Endothelial cell of umbilical vein (primary cell): ENCODE measurements at regions of chr11 and their contacts with region 1.

Region 1: DNA sequence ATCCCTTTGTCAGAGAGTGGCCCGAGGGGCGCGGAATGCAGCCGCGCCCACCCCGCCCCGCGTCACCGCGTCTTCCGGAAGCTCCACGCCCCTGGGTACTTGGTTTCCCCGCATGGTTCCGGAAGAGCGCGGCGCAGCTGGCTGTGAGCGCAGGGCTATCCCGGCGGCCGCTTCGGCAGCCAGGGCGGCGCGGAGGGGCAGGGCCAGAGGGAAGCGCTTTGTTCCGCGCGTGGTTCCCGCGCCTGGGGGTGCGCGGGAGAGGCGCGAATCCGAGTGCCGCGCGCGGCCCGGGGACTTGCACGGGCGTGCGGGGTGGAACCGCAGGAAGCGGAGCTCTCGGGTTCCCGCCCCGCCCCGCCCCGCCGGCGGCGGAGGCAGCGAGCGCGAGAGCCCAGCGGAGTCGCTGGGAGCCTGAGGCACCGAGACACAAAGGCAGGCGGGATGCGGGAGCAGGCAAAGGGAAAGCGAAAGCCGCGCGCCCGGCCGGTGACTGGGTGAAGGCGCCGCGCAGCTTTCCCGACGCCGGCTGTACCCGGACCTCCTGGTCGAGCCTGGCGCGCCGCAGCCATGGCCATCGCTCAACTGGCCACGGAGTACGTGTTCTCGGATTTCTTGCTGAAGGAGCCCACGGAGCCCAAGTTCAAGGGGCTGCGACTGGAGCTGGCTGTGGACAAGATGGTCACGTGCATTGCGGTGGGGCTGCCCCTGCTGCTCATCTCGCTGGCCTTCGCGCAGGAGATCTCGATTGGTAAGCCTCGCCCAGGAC is at the start of gene PANX1:
- DNase-seq: peak; percentile 81
- H3K4me3 ChIP-seq: peak within 1 kb of the TSS; percentile 76 to 87 (median 77)
- H3K27ac ChIP-seq: peak within 1 kb of the TSS; percentile 86
- H3K4me1 ChIP-seq: peaks cover 41% of the 10 kb centered on the region
- H3K27me3 ChIP-seq: no peaks in the 10 kb centered on the region
- CTCF ChIP-seq: no peak
- POLR2A ChIP-seq: peak; percentile 76
- total RNA-seq, gene PANX1: 17.7 and 20.9 TPM in 2 replicates

Region 2: DNA sequence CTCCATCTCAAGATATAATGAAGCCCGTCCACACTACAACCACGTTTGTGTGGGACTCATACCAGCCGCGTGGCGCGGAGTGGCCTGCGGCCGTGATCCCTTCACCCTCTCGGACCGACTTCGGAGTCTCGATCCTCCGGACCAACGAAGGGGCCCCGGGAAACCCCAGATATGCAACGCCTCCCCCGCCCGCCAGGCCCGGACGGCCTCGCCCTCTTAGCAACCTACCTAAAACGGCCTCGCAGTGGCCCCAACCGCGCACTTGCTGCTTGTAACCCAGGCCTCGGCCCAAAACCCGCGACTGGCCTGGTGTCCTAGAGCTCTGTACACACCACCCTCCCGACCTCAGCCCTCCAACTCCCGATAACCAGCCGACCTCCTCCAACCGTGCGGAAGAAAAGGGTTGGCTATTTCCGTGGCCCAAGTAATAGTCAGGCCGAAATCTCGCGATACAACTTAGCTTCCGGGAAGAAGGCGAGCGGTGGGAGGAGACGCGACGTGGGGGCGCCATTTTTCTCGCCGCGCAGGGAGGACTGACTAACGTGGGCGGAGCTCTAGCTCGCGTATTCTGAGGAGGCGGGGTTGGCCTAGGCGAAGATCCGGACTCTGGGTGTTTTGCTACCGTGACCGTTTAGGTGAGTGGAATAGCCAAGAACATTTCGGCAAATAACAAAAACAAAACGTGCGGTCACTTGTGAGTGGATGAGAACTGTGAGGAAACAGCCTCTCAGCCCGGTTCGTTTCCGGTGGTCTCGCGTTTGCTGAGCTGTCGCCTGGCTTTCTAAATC is 387.6 kb before region 1 on chr11 and contains the starts of genes C11orf54 and TAF1D:
- CTCF ChIA-PET with region 1: no interaction called
- POLR2A ChIA-PET with region 1: no interaction called
- dilution Hi-C with region 1: no loop called
- intact Hi-C with region 1: loop called (anchors 2 kb)
- DNase-seq: peak; percentile 98
- H3K4me3 ChIP-seq: peak within 1 kb of the TSS; percentile 75 to 99 (median 93)
- H3K27ac ChIP-seq: peak within 1 kb of the TSS; percentile 54
- H3K4me1 ChIP-seq: peaks cover 28% of the 10 kb centered on the region
- H3K27me3 ChIP-seq: no peaks in the 10 kb centered on the region
- CTCF ChIP-seq: no peak
- POLR2A ChIP-seq: peak; percentile 99
- total RNA-seq, gene C11orf54: 17.7 and 18.7 TPM in 2 replicates
- total RNA-seq, gene TAF1D: 172 and 181 TPM in 2 replicates

Region 3: DNA sequence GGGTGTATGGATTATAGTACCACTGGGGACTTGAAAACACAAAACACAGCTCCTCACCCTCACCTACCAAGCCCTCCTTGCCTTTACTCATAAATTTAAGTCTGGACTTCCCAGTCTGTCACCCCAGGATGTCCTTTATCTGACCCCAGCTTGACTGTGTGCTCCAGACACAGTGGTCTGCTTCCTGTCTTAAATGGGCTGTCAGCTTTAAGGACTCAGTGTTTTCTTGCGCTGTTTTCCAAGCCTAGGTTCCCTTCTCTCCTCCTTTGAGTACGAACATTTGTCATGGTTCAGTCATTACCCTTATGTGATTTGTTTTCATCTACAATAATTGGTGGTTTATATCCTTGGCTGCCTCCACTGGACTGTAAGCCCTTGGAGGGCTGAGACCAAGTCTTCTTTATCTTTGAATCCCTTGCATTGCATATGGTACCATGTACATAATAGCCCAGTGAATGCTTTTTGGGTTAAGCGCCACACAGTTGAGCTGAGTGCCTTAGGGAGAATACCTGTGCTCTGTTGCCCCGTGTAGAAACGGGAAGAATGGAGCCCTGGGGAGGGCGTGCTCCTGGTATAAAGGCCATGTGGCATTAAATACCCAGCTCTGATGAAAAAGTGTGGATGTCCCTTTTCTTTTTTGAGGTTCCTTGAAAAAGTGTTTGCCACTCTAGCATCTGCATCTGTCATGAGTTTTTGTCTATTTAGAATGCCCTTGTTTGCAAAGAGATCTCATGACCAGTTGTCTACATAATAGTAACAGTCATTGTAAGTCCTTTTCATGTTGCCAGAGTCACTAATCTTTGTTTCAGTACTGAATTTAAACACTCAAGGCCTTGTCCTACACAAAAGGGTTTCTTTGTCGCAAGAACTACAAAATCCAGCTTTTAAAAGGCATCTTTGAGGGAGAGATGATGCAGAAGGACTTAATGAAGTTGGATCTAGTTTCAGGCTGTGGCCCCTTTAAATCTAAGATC is 13.7 kb after region 1 on chr11:
- CTCF ChIA-PET with region 1: interaction called, 11 read pairs
- POLR2A ChIA-PET with region 1: interaction called, 3 read pairs
- dilution Hi-C with region 1: no loop called
- intact Hi-C with region 1: no loop called
- DNase-seq: peak; percentile 70
- H3K4me3 ChIP-seq: no peak overlapping the region
- H3K27ac ChIP-seq: peak overlapping the region; percentile 68
- H3K4me1 ChIP-seq: peaks cover 29% of the 10 kb centered on the region
- H3K27me3 ChIP-seq: no peaks in the 10 kb centered on the region
- CTCF ChIP-seq: no peak
- POLR2A ChIP-seq: no peak

Region 4: GRCh38 chr11:94171693-94172440 is 42.9 kb after region 1 on chr11:
- CTCF ChIA-PET with region 1: interaction called, 10 read pairs
- POLR2A ChIA-PET with region 1: no interaction called
- dilution Hi-C with region 1: no loop called
- intact Hi-C with region 1: no loop called
- DNase-seq: peak; percentile 52
- H3K4me3 ChIP-seq: no peak overlapping the region
- H3K27ac ChIP-seq: no peak overlapping the region
- H3K4me1 ChIP-seq: no peaks in the 10 kb centered on the region
- H3K27me3 ChIP-seq: no peaks in the 10 kb centered on the region
- CTCF ChIP-seq: peak; percentile 77 to 81
- POLR2A ChIP-seq: no peak

Region 5: DNA sequence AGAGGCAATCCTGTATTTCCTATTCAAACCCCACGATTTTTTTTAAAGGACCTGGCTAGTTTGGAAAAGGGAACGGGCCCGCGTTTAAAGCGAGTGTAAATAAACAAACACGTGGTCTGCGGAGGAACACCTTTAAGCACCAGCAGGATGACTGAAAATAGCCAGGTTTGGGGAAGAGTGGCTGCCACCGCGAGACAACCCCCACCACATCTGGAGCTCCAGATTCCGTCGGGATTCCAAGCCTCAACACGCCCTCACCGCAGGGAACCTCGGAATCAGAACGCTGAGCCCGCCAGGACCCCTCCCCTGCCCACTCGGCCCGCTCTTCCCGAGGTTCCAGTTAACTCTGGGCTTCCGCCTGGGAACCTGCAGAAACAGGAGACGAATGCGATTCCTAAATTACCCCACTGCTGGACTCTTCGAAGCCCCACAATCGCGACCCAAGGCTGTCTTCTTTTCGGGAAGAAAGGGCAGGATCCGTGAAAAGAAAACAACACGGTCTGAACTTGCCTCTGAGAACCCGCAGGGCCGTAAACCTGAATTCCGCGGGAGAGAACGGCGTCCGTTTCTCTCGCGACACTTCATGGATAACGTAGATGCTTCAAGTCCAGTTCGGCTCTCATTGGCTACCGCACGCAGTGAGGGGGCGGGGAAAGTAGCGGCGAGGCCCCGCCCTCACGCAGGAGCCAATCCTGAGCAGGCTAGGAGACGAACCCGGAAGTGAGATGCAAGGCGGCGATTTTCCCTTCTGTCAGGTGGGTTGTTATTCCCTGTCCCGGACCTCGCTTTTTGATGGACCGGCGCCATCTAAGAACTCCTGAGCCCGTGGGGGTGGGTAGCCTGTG is 364.6 kb after region 1 on chr11 and contains the starts of genes ANKRD49 and MRE11:
- CTCF ChIA-PET with region 1: no interaction called
- POLR2A ChIA-PET with region 1: no interaction called
- dilution Hi-C with region 1: no loop called
- intact Hi-C with region 1: loop called (anchors 1 kb)
- DNase-seq: peak; percentile 100
- H3K4me3 ChIP-seq: peak within 1 kb of the TSS; percentile 68 to 91 (median 85)
- H3K27ac ChIP-seq: peak within 1 kb of the TSS; percentile 56
- H3K4me1 ChIP-seq: peaks cover 16% of the 10 kb centered on the region
- H3K27me3 ChIP-seq: no peaks in the 10 kb centered on the region
- CTCF ChIP-seq: no peak
- POLR2A ChIP-seq: peak; percentile 62
- total RNA-seq, gene ANKRD49: 7.6 and 8.0 TPM in 2 replicates
- total RNA-seq, gene MRE11: 22.0 and 25.3 TPM in 2 replicates